Activated naive CD8-positive, alpha-beta T cell treated with anti-CD3 and anti-CD28 coated beads, Interleukin-2, amount 10 ng/mL, durations not matched to agents 7 days and 5 days (primary cell): ENCODE measurements at regions of chr15 and their contacts with region 1.

Region 1: DNA sequence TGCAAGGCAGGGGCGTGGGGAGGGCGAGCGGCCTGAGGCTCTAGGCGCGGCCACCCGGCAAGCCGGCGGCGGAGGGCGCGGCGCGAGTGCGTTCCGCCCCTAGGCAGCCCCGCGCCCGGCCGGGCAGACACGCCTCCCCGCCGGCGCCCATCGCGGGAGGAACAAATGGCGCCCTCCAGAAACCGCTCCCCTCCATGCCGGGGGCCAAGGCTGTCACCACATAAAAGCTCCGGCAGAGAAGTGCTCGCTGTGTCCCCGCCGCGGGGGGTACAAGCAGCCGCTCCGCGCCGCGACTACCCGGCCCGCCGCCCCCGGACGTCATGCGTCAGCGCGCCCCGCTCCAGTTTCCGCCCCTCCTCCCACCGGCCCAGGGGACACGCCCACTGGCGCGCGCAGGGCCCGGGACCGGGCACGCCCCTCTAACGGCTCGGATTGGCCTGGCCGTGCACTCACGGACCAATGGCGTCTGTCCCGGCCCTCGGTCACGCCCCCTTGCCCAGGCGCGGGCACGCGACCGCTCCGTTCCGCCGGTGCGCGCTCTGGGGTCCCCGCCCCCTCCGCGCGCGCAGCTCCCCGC is 391 bp upstream of the KLF13 start:
- DNase-seq: peak; percentile 100
- ATAC-seq: peak; percentile 77
- H3K4me3 Mint-ChIP-seq: peak overlapping the region; percentile 94
- H3K27ac Mint-ChIP-seq: peak overlapping the region; percentile 72
- H3K4me1 Mint-ChIP-seq: peaks cover 43% of the 10 kb centered on the region
- H3K27me3 Mint-ChIP-seq: no peaks in the 10 kb centered on the region

Region 2: DNA sequence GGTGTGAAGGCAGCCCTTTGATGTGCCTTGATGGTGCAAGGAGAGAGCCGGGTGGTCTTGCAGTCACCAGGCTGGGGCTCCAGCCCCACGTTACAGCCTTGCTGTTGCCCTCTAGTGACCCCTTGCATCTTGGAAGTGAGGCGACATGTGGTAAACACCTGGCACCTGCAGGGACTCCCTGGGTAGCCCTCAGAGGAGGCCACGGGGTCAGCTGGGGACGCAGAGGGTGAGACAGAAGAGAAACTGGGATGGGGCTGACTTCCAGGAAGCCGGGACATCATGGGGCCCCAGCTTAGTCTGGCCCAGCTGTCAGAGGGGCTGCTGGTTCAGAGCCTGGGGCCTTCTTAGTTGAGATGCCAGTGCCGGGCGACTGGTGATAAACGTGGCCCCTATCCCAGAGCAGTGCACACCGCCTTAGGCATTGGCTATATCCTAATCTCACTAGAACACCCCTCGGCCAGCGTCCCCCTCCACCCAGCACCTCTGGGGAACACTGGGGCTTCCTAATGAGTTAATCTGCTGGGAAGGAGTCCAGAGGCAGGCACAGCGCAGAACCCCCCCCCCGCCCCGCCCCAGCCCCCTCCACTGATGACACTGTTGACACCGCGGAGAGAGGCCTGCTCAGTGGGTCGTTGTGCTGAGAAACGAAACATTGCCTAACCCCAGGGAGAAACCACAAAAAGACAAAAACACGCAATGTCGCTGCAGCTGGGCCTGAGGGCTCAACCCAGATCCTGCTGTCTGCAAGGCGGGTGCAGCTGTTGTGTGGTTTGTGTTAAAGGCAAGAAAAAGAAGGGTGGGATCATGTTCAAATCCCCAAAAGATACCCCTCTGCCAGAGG is 60.2 kb before region 1 on chr15:
- POLR2A ChIA-PET with region 1: interaction called, 104 read pairs
- DNase-seq: peak; percentile 73
- ATAC-seq: peak; percentile 79
- H3K4me3 Mint-ChIP-seq: peak overlapping the region; percentile 84
- H3K27ac Mint-ChIP-seq: peak overlapping the region; percentile 99
- H3K4me1 Mint-ChIP-seq: peaks cover 75% of the 10 kb centered on the region
- H3K27me3 Mint-ChIP-seq: no peaks in the 10 kb centered on the region

Region 3: GRCh38 chr15:31338879-31339557 is 12.8 kb after region 1 on chr15:
- POLR2A ChIA-PET with region 1: interaction called, 126 read pairs
- DNase-seq: no peak
- ATAC-seq: peak; percentile 41
- H3K4me3 Mint-ChIP-seq: peak overlapping the region; percentile 68
- H3K27ac Mint-ChIP-seq: peak overlapping the region; percentile 80
- H3K4me1 Mint-ChIP-seq: peaks cover 97% of the 10 kb centered on the region
- H3K27me3 Mint-ChIP-seq: no peaks in the 10 kb centered on the region

Region 4: GRCh38 chr15:31352911-31353811 is 26.9 kb after region 1 on chr15:
- POLR2A ChIA-PET with region 1: interaction called, 126 read pairs
- DNase-seq: peak; percentile 61
- ATAC-seq: peak; percentile 42
- H3K4me3 Mint-ChIP-seq: peak overlapping the region; percentile 80
- H3K27ac Mint-ChIP-seq: peak overlapping the region; percentile 100
- H3K4me1 Mint-ChIP-seq: peaks cover 83% of the 10 kb centered on the region
- H3K27me3 Mint-ChIP-seq: no peaks in the 10 kb centered on the region

Region 5: DNA sequence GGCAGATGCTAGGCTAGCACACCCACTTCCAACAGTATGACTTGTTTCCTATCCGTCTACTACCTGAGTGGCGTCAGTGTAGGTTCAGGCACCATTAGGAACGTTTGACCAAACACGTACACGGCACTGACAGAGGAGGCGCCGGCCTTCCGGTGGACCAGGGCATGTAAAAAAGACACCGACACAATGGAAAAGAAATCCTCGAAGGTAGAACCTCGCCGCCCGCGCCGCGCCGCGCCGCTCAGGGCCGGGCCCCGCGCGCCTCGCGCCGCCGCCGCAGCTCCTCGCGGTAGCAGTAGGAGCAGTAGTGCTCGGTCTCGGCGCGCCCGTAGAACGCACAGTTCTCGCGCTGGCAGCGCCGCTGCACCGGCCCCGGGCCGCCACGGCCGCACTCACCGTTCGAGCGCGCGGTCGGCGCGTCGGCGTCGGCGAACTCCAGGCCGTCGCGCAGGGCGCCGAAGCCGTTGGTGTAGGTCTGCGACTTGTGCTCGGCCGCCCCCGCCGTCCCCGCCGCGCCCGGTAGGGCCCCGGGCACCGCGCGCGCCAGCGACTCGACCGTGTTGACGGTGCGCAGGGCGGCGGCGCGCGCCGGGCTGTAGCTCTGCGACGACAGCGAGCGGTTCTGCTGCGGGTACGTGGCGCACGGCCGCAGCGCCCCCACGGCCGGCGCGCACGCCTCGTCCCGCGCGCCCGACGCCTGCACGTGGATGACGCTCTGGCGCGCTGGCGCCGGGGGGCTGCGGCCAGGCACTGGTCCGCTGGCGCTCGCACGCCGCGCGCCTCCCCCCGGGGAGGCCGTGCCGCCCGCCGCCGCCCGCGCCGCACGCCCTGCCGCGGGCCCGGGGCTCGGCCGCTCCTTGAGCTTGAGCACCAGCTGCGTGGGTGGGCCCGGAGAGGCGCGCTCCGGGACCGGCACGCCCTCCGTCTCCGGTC is 157.1 kb after region 1 on chr15:
- POLR2A ChIA-PET with region 1: interaction called, 15 read pairs
- DNase-seq: peak; percentile 73
- ATAC-seq: peak; percentile 56
- H3K4me3 Mint-ChIP-seq: peak overlapping the region; percentile 97
- H3K27ac Mint-ChIP-seq: peak overlapping the region; percentile 95
- H3K4me1 Mint-ChIP-seq: peaks cover 48% of the 10 kb centered on the region
- H3K27me3 Mint-ChIP-seq: no peaks in the 10 kb centered on the region